HepG2 (cell line): ENCODE measurements at regions of chr5 and their contacts with region 1.

Region 1: GRCh38 chr5:66633795-66634194 is 37.6 kb downstream of the MAST4 start:
- DNase-seq: peak; percentile 25
- ATAC-seq: peak; percentile 81
- H3K4me3 ChIP-seq: no peak overlapping the region
- H3K27ac ChIP-seq: no peak overlapping the region
- H3K4me1 ChIP-seq: peaks cover 8% of the 10 kb centered on the region; the same call in 1 of the 2 replicates
- H3K27me3 ChIP-seq: no peaks in the 10 kb centered on the region
- CTCF ChIP-seq: no peak
- EP300 ChIP-seq: no peak
- POLR2A ChIP-seq: no peak
- RAD21 ChIP-seq: no peak

Region 2: DNA sequence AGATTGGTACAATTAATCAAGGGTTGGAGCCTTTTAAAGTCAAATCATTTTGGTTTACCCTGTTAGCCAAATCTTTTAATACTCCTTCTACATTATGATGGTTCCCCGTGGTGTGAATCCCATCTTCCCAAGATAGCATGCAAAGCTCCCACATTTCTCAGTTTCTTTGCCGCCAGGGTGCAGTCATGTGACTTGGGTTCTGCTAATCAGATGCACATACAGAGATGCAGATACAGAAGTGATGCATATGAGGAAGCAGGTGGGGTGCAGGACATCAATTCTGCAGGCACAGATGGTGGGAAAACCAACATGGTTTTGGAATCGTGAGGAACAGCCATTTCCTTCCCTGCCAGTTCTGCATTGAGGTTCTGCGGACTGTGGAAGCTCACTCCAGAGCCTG is 46.0 kb before region 1 on chr5:
- CTCF ChIA-PET with region 1: no interaction called
- POLR2A ChIA-PET with region 1: no interaction called
- in situ Hi-C with region 1: no loop called
- intact Hi-C with region 1: loop called (anchors 1 kb)
- DNase-seq: no peak
- ATAC-seq: no peak
- H3K4me3 ChIP-seq: no peak overlapping the region
- H3K27ac ChIP-seq: no peak overlapping the region
- H3K4me1 ChIP-seq: no peaks in the 10 kb centered on the region
- H3K27me3 ChIP-seq: no peaks in the 10 kb centered on the region
- CTCF ChIP-seq: no peak
- EP300 ChIP-seq: no peak
- POLR2A ChIP-seq: no peak
- RAD21 ChIP-seq: no peak

Region 3: GRCh38 chr5:66617226-66617861 is 16.5 kb before region 1 on chr5:
- CTCF ChIA-PET with region 1: no interaction called
- POLR2A ChIA-PET with region 1: no interaction called
- in situ Hi-C with region 1: no loop called
- intact Hi-C with region 1: no loop called
- DNase-seq: no peak
- ATAC-seq: no peak
- H3K4me3 ChIP-seq: no peak overlapping the region
- H3K27ac ChIP-seq: no peak overlapping the region
- H3K4me1 ChIP-seq: no peaks in the 10 kb centered on the region
- H3K27me3 ChIP-seq: peaks cover 0 to 26% of the 10 kb centered on the region in 2 experiments; a peak in 3 of 5 replicates
- CTCF ChIP-seq: no peak
- EP300 ChIP-seq: no peak
- POLR2A ChIP-seq: no peak
- RAD21 ChIP-seq: no peak

Region 4: GRCh38 chr5:67156976-67157583 is 523.3 kb after region 1 on chr5:
- CTCF ChIA-PET with region 1: no interaction called
- POLR2A ChIA-PET with region 1: no interaction called
- in situ Hi-C with region 1: no loop called
- intact Hi-C with region 1: no loop called
- DNase-seq: peak; percentile 22
- ATAC-seq: peak; percentile 71
- H3K4me3 ChIP-seq: no peak overlapping the region
- H3K27ac ChIP-seq: no peak overlapping the region
- H3K4me1 ChIP-seq: peaks cover 8% of the 10 kb centered on the region
- H3K27me3 ChIP-seq: no peaks in the 10 kb centered on the region
- CTCF ChIP-seq: peak; percentile 61
- EP300 ChIP-seq: no peak
- POLR2A ChIP-seq: no peak
- RAD21 ChIP-seq: no peak